ENCODE measurements at regions of chr20 and their contacts with region 1.

Region 1: GRCh38 chr20:44609511-44610312 is 27.3 kb downstream of the PKIG start:
- DNase-seq: peak; percentile 92
- H3K4me3 Mint-ChIP-seq: peak overlapping the region; percentile 58
- H3K27ac Mint-ChIP-seq: peak overlapping the region; percentile 76
- H3K4me1 Mint-ChIP-seq: peaks cover 10% of the 10 kb centered on the region
- H3K27me3 Mint-ChIP-seq: no peaks in the 10 kb centered on the region
- CTCF ChIP-seq: peak; percentile 96

Region 2: DNA sequence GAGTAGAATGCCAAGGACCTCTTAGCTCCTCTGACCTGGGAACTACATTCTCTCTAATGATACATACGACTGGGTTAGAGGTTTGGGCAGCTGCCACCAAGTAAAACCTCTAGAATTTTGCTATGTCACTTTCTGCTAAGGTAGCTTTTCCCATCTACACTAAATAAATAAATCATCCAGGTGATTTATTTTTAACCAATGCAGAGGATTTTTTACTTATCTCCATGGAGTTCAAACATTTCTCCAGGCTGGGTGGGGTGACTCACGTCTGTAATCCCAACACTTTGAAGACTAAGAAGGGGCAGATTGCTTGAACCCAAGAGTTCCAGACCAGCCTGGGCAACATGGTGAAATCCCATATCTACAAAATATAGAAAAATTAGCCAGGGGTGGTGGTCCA is 227.1 kb before region 1 on chr20:
- CTCF ChIA-PET with region 1: interaction called, 23 read pairs
- POLR2A ChIA-PET with region 1: interaction called, 3 read pairs
- intact Hi-C with region 1: loop called (anchors 5 kb)
- DNase-seq: no peak
- H3K4me3 Mint-ChIP-seq: no peak overlapping the region
- H3K27ac Mint-ChIP-seq: no peak overlapping the region
- H3K4me1 Mint-ChIP-seq: peaks cover 10% of the 10 kb centered on the region
- H3K27me3 Mint-ChIP-seq: peaks cover 7% of the 10 kb centered on the region
- CTCF ChIP-seq: no peak

Region 3: GRCh38 chr20:44467289-44467883 is 142.3 kb before region 1 on chr20:
- CTCF ChIA-PET with region 1: interaction called, 45 read pairs
- POLR2A ChIA-PET with region 1: interaction called, 10 read pairs
- intact Hi-C with region 1: loop called (anchors 10 kb)
- DNase-seq: peak; percentile 97
- H3K4me3 Mint-ChIP-seq: peak overlapping the region; percentile 26
- H3K27ac Mint-ChIP-seq: peak overlapping the region; percentile 58
- H3K4me1 Mint-ChIP-seq: peaks cover 40% of the 10 kb centered on the region
- H3K27me3 Mint-ChIP-seq: no peaks in the 10 kb centered on the region
- CTCF ChIP-seq: no peak

Region 4: GRCh38 chr20:44501448-44501847 is 108.3 kb before region 1 on chr20:
- CTCF ChIA-PET with region 1: interaction called, 25 read pairs
- POLR2A ChIA-PET with region 1: interaction called, 31 read pairs
- intact Hi-C with region 1: no loop called
- DNase-seq: peak; percentile 27
- H3K4me3 Mint-ChIP-seq: no peak overlapping the region
- H3K27ac Mint-ChIP-seq: peak overlapping the region; percentile 10
- H3K4me1 Mint-ChIP-seq: peaks cover 23% of the 10 kb centered on the region
- H3K27me3 Mint-ChIP-seq: no peaks in the 10 kb centered on the region
- CTCF ChIP-seq: no peak

Region 5: DNA sequence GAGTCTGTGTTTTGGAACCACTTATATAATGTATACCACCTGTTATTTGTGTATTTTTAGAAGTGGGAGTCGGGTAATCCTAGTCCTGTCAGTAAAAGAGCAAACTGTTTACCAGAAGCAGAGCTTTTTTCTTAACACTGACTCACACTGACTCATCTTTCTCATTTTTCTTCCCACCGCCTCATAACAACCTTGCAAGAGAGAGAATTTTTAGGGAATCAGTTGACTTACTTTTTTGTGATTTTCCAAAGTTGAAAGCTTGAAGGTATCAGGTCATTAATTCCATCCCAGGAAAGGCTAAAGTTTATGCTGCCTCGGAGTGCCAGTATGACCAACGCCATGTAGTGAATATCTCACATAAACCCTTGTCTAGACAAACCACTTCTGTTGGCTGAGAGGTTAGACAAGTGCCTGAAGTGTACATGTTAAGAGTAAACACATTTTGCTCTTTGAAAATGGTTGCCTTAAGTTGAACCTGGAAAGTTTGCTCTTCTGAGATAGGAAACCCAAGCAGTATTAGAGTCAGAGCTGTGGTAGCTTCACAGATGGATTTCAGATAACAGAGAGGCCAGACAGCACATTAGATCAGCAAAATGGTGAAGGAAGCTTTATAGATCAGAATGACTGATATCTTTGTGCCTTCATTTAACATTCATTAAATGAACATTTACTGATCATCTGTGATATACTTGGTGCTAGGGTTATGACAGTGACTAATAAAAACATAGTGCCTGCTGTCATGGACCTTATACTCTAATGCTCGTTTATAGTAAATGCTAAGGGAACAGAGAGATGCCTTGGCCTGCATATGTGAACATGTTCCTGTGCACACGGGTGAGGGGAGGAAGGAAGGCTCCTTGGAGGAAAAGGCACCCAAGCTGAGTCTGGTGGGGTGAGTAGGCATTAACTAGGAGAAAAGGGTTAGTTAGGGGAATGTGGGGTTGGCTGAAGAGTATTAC is 56.5 kb before region 1 on chr20:
- CTCF ChIA-PET with region 1: interaction called, 14 read pairs
- POLR2A ChIA-PET with region 1: interaction called, 9 read pairs
- intact Hi-C with region 1: no loop called
- DNase-seq: peak; percentile 71
- H3K4me3 Mint-ChIP-seq: no peak overlapping the region
- H3K27ac Mint-ChIP-seq: peak overlapping the region; percentile 81
- H3K4me1 Mint-ChIP-seq: peaks cover 22% of the 10 kb centered on the region
- H3K27me3 Mint-ChIP-seq: no peaks in the 10 kb centered on the region
- CTCF ChIP-seq: no peak

Region 6: DNA sequence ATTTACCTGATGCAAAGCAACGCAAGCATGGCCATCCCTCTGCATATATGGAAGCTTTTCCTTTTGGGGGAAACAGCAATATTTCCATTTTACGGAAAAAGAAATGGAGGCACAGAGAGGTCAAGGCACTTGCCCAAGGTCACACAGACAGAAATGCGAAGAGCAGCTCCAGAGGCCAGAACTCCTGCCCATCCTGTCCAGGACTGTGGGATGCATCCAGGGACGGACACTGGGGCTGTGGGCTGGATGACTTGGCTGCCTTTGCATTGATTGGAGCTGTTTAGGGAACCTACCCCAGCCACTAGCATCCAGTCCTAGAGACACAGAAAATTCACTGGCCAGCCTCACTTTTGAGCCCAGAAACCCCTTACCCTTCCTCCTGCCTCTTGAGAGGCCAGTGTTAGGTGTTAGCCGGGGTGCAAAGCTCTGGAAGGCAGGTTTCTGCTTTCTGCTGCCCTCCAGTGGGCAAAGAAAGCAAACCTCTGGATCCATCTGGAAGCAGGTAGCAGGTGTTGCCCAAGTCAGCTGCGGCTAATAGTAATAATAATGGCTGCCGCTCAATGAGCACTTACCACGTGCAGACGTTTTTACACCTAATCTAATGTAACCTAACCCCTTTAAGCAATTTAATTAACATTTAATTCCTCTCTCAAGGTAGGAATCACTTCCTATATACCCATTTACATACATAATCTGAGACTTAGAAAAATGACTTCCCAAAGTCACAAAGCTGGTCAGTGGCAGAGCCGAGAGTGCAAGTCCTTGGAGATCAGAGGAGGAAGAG is 73.7 kb after region 1 on chr20:
- CTCF ChIA-PET with region 1: interaction called, 13 read pairs
- POLR2A ChIA-PET with region 1: no interaction called
- intact Hi-C with region 1: no loop called
- DNase-seq: peak; percentile 63
- H3K4me3 Mint-ChIP-seq: no peak overlapping the region
- H3K27ac Mint-ChIP-seq: no peak overlapping the region
- H3K4me1 Mint-ChIP-seq: peaks cover 18% of the 10 kb centered on the region
- H3K27me3 Mint-ChIP-seq: no peaks in the 10 kb centered on the region
- CTCF ChIP-seq: peak; percentile 34